Dendritic cell treated with granulocyte-macrophage colony-stimulating factor and Interleukin-4, amounts not matched to agents 40 ng/mL and 50 ng/mL, for 4 days (primary cell): ENCODE measurements at regions of chr9 and their contacts with region 1.

Region 1: GRCh38 chr9:104810421-104811339 is 46.8 kb downstream of the NIPSNAP3B start:
- H3K4me3 Mint-ChIP-seq: no peak overlapping the region
- H3K27ac Mint-ChIP-seq: no peak overlapping the region
- H3K4me1 Mint-ChIP-seq: no peaks in the 10 kb centered on the region
- H3K27me3 Mint-ChIP-seq: no peaks in the 10 kb centered on the region

Region 2: DNA sequence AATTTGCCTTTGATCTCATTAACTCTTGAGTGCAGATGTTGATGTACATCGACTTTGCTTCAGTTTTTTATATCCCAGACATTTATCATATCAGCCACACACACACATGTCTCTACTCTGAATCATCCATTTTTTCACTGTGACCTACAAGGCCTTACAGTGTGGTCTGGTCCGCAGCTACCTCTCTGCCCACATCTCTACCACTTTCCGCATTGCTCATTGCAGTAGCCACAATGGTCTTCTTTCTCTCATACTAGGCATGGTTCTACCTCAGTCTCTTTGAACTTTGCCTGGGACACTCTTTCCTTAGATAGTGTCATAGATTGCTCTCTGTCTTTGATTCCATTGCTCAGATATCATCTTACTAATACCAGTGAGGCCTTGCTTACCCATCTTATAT is 549.2 kb after region 1 on chr9:
- intact Hi-C with region 1: loop called (anchors 10 kb)
- H3K4me3 Mint-ChIP-seq: no peak overlapping the region
- H3K27ac Mint-ChIP-seq: no peak overlapping the region
- H3K4me1 Mint-ChIP-seq: no peaks in the 10 kb centered on the region
- H3K27me3 Mint-ChIP-seq: no peaks in the 10 kb centered on the region